Activated CD4-positive, alpha-beta T cell treated with anti-CD3 and anti-CD28 coated beads, Interleukin-2, amount 10 ng/mL, durations not matched to agents 24 days and 14 days (primary cell): ENCODE measurements at regions of chr16 and their contacts with region 1.

Region 1: GRCh38 chr16:78705694-78706093 is 606.2 kb downstream of the WWOX start:
- DNase-seq: peak; percentile 65
- H3K4me3 Mint-ChIP-seq: no peak overlapping the region
- H3K27ac Mint-ChIP-seq: no peak overlapping the region
- H3K4me1 Mint-ChIP-seq: peaks cover 5% of the 10 kb centered on the region
- H3K27me3 Mint-ChIP-seq: peaks cover 4% of the 10 kb centered on the region

Region 2: DNA sequence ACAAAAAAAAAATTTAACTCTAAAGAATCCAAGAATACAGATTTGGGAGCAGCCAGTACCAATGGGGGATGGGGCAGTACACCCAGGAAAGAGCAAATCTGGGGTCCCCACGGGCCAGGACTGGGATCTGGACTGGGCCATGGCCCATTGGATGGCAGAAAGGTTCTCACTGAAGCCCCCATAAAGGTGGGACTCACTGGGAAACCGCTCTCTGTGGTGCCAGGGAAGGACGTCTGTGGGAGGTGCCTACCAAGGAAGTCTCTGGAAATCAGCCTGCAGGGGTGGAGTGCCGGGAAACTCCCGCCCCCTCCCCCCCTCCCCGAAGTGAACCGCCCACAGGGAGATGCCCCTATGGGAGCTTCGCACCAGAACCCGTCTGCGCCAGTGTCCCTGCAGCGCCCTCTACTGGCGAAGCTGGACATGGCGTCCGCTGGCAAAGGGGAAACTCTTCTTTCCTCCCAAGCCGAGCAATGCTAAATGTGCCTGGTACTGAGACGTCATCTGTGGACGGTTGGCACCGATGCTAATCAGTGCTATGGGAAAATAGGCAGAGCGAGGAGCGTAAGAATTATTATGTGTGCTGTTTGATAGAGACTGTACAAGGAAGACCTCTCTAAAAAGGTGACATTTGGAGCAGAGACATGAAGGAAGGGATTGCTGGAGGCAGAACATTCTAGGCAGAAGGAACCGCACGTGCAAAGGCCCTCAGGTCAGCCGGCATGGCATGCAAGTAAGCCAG is 64.8 kb after region 1 on chr16:
- intact Hi-C with region 1: loop called (anchors 2 kb)
- DNase-seq: peak; percentile 93
- H3K4me3 Mint-ChIP-seq: no peak overlapping the region
- H3K27ac Mint-ChIP-seq: peak overlapping the region; percentile 67
- H3K4me1 Mint-ChIP-seq: peaks cover 28% of the 10 kb centered on the region
- H3K27me3 Mint-ChIP-seq: no peaks in the 10 kb centered on the region

Region 3: DNA sequence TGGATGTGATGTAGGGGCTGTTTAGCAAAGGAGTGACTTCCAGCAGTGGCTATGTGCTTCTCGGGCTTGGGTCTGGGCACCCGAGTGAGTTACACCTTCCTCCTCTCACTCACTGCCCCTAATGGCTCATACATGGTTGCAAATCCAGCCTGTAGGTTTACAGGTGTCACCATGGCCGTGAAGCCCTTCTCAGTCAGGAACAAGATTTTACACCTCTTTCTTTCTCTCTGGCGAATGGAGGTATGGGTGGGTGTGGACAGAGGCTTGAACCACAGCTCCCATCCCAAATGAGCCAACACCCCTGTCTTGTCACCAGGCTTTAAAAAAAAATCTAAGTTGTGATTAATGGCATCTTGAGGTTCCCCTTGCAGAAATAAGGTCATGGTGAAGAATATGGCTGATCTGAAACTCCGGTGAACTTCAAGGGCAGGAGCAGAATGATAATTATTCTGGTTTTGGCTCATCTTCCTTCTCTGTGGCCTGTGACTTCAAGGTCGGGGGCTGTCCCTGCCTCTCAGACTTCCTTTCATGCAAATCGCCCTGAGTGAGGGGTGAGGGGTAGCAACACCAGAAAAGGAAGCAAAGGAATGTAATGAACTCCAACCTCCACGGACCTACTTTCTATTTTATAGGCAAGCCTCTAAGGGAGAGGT is 563.6 kb after region 1 on chr16:
- intact Hi-C with region 1: loop called (anchors 5 kb)
- DNase-seq: peak; percentile 88
- H3K4me3 Mint-ChIP-seq: peak overlapping the region; percentile 56
- H3K27ac Mint-ChIP-seq: peak overlapping the region; percentile 86
- H3K4me1 Mint-ChIP-seq: peaks cover 74% of the 10 kb centered on the region
- H3K27me3 Mint-ChIP-seq: peaks cover 9% of the 10 kb centered on the region

Region 4: DNA sequence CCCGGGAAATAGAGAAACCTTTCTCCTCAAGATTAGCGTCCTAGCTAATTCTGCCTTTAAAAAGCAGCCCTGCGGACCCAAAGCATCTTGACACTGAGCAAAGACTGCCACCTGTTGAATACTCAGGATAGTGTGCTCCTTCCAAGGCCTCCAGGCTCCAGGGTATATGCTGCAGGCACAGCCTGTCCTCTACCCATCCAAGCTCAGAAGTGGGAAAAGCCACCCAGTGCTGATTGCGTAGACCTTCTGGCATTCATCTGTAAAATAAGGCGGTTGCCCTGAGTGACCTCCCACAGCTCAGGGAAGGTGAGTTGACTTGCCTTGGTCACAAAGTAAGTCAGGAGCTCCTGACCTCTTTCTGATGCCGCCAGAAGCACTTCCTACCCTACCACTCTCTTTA is 1379.0 kb after region 1 on chr16:
- intact Hi-C with region 1: loop called (anchors 2 kb)
- DNase-seq: peak; percentile 67
- H3K4me3 Mint-ChIP-seq: no peak overlapping the region
- H3K27ac Mint-ChIP-seq: no peak overlapping the region
- H3K4me1 Mint-ChIP-seq: no peaks in the 10 kb centered on the region
- H3K27me3 Mint-ChIP-seq: peaks cover 6% of the 10 kb centered on the region